ENCODE measurements at regions of chr18 and their contacts with region 1.

Region 1: GRCh38 chr18:23032030-23032582 is 99.0 kb downstream of the RBBP8 start:
- DNase-seq: peak; percentile 75
- H3K4me3 Mint-ChIP-seq: no peak overlapping the region
- H3K27ac Mint-ChIP-seq: peak overlapping the region; percentile 50
- H3K4me1 Mint-ChIP-seq: peaks cover 17% of the 10 kb centered on the region
- H3K27me3 Mint-ChIP-seq: no peaks in the 10 kb centered on the region
- CTCF ChIP-seq: no peak

Region 2: DNA sequence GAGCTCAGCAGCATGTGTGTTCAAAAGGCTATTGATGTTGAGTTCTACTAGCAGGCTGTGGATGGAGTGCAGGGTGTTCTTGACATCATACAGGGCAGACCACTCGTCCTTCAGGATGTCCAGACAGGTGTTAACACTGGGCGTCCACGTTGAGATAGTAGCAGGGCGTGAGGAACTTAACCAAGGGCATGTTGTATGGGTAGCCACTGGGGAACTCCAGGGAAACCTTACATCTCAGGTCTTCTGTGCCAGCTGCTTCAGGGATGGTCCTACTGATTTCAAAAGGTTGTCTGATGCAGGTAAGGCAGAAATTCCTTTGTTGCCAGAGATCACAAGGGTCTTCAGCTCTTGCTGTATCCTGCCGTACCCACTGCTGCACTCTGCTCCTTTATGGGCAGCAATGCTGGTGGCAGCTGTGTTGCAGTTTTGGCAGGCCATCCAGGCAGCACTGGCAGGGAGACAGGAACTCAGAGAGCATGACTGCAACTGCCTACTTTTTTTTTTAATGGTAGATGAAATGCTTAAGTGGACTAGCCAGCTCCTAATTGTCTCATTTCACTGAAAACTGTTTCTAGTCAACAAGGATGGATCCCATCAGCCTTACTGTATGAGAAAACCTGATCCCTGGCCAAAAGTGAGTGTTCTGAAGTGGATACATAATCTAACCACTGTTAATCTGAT is 131.4 kb before region 1 on chr18:
- CTCF ChIA-PET with region 1: no interaction called
- POLR2A ChIA-PET with region 1: no interaction called
- intact Hi-C with region 1: no loop called
- DNase-seq: no peak
- H3K4me3 Mint-ChIP-seq: no peak overlapping the region
- H3K27ac Mint-ChIP-seq: no peak overlapping the region
- H3K4me1 Mint-ChIP-seq: no peaks in the 10 kb centered on the region
- H3K27me3 Mint-ChIP-seq: no peaks in the 10 kb centered on the region
- CTCF ChIP-seq: no peak

Region 3: DNA sequence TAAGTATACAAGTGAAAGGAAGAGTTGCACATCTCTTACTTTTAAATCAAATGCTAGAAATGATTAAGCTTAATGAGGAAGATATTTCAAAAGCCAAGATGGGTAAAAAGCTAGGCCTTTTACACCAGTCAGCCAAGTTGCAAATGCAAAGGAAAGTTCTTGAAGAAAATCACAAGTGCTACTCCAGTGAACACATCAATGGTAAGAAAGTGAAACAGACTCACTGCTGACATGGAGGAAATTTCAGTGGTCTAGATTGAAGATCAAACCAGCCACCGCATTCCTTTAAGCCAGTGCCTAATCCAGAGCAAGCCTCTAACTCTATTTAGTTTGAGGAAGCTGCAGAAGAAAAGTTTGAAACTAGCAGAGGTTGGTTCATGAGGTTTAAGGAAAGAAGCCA is 19.9 kb before region 1 on chr18:
- CTCF ChIA-PET with region 1: interaction called, 13 read pairs
- POLR2A ChIA-PET with region 1: interaction called, 3 read pairs
- intact Hi-C with region 1: no loop called
- DNase-seq: no peak
- H3K4me3 Mint-ChIP-seq: no peak overlapping the region
- H3K27ac Mint-ChIP-seq: no peak overlapping the region
- H3K4me1 Mint-ChIP-seq: no peaks in the 10 kb centered on the region
- H3K27me3 Mint-ChIP-seq: no peaks in the 10 kb centered on the region
- CTCF ChIP-seq: no peak

Region 4: DNA sequence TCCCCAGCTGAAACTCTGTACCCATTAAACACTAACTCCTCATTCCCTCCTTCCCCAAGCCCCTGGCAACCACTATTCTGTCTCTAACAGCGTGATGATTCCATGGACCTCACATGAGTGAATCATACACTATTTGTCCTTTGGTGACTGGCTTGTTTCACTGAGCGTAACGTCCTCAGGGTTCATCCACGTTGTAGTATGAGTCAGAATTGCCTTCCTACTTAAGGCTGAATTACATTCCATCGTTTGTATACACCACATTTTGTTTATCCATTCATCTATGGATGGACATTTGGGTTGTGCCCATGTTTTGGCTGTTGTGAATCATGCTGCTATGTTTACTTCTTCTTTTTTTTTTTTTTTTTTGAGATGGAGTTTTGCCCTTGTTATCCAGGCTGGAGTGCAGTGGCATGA is 83.6 kb after region 1 on chr18:
- CTCF ChIA-PET with region 1: interaction called, 9 read pairs
- POLR2A ChIA-PET with region 1: no interaction called
- intact Hi-C with region 1: loop called (anchors 5 kb)
- DNase-seq: peak; percentile 92
- H3K4me3 Mint-ChIP-seq: no peak overlapping the region
- H3K27ac Mint-ChIP-seq: peak overlapping the region; percentile 40
- H3K4me1 Mint-ChIP-seq: peaks cover 18% of the 10 kb centered on the region
- H3K27me3 Mint-ChIP-seq: no peaks in the 10 kb centered on the region
- CTCF ChIP-seq: no peak

Region 5: GRCh38 chr18:23401400-23402347 is 369.6 kb after region 1 on chr18:
- CTCF ChIA-PET with region 1: interaction called, 14 read pairs
- POLR2A ChIA-PET with region 1: no interaction called
- intact Hi-C with region 1: no loop called
- DNase-seq: peak; percentile 26
- H3K4me3 Mint-ChIP-seq: no peak overlapping the region
- H3K27ac Mint-ChIP-seq: no peak overlapping the region
- H3K4me1 Mint-ChIP-seq: peaks cover 8% of the 10 kb centered on the region
- H3K27me3 Mint-ChIP-seq: no peaks in the 10 kb centered on the region
- CTCF ChIP-seq: no peak

Region 6: GRCh38 chr18:23416298-23416697 is 384.2 kb after region 1 on chr18:
- CTCF ChIA-PET with region 1: interaction called, 42 read pairs
- POLR2A ChIA-PET with region 1: interaction called, 4 read pairs
- intact Hi-C with region 1: loop called (anchors 2 kb)
- DNase-seq: no peak
- H3K4me3 Mint-ChIP-seq: no peak overlapping the region
- H3K27ac Mint-ChIP-seq: no peak overlapping the region
- H3K4me1 Mint-ChIP-seq: no peaks in the 10 kb centered on the region
- H3K27me3 Mint-ChIP-seq: no peaks in the 10 kb centered on the region
- CTCF ChIP-seq: no peak

Measured in MCF 10A (cell line).